Activated CD4-positive, alpha-beta memory T cell treated with anti-CD3 and anti-CD28 coated beads, Interleukin-2, amount 10 ng/mL, durations not matched to agents 7 days and 5 days (primary cell): ENCODE measurements at regions of chr15 and their contacts with region 1.

Region 1: GRCh38 chr15:55221090-55222011 is 24.6 kb upstream of the RSL24D1 start:
- DNase-seq: peak; percentile 46
- H3K4me3 Mint-ChIP-seq: peak overlapping the region; percentile 43
- H3K27ac Mint-ChIP-seq: peak overlapping the region; percentile 94
- H3K4me1 Mint-ChIP-seq: peaks cover 84% of the 10 kb centered on the region
- H3K27me3 Mint-ChIP-seq: no peaks in the 10 kb centered on the region

Region 2: DNA sequence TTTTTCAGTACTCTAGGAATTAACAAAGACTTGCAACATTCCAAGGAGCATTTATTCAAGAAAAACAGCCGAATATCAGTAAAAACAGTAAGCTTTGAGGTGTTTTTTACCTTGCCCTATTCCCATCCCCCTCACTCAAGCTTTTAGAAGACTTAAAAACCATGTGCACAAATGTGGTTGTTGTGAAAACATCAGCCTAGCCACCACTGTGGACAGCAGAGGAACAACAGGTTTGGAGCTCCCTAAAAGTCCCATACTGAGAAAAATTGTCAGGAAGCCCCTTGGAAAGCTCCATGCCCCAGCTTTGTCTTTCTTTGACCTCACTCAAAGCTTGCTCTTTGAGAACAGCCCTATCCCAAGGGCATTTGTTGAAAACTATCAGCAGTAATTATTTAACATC is 10.1 kb after region 1 on chr15:
- CTCF ChIA-PET with region 1: interaction called, 7 read pairs
- POLR2A ChIA-PET with region 1: interaction called, 10 read pairs
- DNase-seq: no peak
- H3K4me3 Mint-ChIP-seq: no peak overlapping the region
- H3K27ac Mint-ChIP-seq: no peak overlapping the region
- H3K4me1 Mint-ChIP-seq: peaks cover 47% of the 10 kb centered on the region
- H3K27me3 Mint-ChIP-seq: no peaks in the 10 kb centered on the region

Region 3: GRCh38 chr15:55279746-55280351 is 58.5 kb after region 1 on chr15:
- CTCF ChIA-PET with region 1: interaction called, 16 read pairs
- POLR2A ChIA-PET with region 1: interaction called, 25 read pairs
- DNase-seq: peak; percentile 68
- H3K4me3 Mint-ChIP-seq: peak overlapping the region; percentile 63
- H3K27ac Mint-ChIP-seq: peak overlapping the region; percentile 91
- H3K4me1 Mint-ChIP-seq: peaks cover 97% of the 10 kb centered on the region
- H3K27me3 Mint-ChIP-seq: no peaks in the 10 kb centered on the region

Region 4: DNA sequence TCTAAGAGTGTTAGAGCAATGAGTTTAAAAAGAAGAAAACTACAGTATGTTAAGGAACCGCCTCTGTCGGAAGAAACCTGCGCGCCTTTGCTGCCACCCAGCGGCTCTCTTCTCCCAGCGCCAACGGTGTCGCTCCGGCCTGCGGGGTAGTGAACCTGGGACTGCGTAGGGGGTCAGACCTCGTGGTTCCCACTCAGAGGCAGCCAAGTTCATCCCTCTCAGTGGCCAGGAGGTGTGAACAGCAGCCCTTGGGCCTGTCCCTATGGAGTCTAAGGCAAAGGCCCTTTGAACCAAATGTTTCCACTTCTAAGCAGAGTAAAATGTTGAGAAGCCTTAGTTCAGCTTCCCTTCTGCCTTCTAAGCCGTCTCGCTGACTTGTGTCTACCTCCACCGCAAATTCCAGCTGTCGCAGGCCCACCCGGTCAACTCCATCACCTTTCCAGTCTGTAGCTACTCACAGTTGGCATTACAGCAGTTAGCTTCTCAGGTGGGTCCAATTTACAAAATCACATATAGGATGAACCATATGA is 69.2 kb after region 1 on chr15:
- CTCF ChIA-PET with region 1: interaction called, 39 read pairs
- POLR2A ChIA-PET with region 1: interaction called, 14 read pairs
- DNase-seq: peak; percentile 86
- H3K4me3 Mint-ChIP-seq: peak overlapping the region; percentile 94
- H3K27ac Mint-ChIP-seq: peak overlapping the region; percentile 86
- H3K4me1 Mint-ChIP-seq: peaks cover 37% of the 10 kb centered on the region
- H3K27me3 Mint-ChIP-seq: no peaks in the 10 kb centered on the region